ENCODE measurements at regions of chr17 and their contacts with region 1.

Region 1: DNA sequence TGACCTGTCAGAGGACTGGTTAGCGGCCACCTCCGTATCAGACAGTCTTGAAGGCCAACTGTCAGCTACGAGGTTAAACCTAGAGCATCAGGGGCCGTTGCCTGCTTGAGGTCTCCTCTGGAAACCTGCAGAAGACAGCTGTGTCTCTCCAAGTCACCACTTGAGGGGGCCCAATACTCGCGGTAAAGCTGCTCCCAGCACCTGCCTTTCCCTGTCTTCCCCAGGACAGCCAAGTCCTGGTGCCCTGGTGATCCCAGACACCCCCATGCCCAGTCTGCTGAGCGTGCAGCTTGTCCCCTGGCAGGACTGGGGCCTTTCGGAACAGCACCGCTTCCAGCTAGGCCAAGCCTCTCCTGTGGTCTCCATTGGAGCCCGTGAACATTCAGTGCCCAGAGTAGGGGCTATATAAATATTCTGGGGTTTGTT is 80.1 kb downstream of the DNAH17 start:
- DNase-seq: peak; percentile 66 to 85 (median 84)
- ATAC-seq: peak; percentile 78 to 79
- H3K4me3 ChIP-seq: no peak overlapping the region
- H3K27ac ChIP-seq: no peak overlapping the region
- H3K4me1 ChIP-seq: no peaks in the 10 kb centered on the region
- H3K27me3 ChIP-seq: no peaks in the 10 kb centered on the region

Region 2: GRCh38 chr17:78708510-78708973 is 211.4 kb after region 1 on chr17:
- intact Hi-C with region 1: loop called (anchors 2 to 5 kb)
- DNase-seq: peak; percentile 72 to 87 (median 86)
- ATAC-seq: peak; percentile 89 to 90
- H3K4me3 ChIP-seq: no peak overlapping the region
- H3K27ac ChIP-seq: no peak overlapping the region
- H3K4me1 ChIP-seq: peaks cover 4% of the 10 kb centered on the region
- H3K27me3 ChIP-seq: no peaks in the 10 kb centered on the region

Region 3: GRCh38 chr17:78798695-78799559 is 301.8 kb after region 1 on chr17:
- intact Hi-C with region 1: loop called in 3 of 4 experiments (anchors 5 kb)
- DNase-seq: peak in 1 of 3 donors; percentile 66
- ATAC-seq: peak; percentile 20 to 40
- H3K4me3 ChIP-seq: no peak overlapping the region
- H3K27ac ChIP-seq: no peak overlapping the region
- H3K4me1 ChIP-seq: peaks cover 2% of the 10 kb centered on the region
- H3K27me3 ChIP-seq: no peaks in the 10 kb centered on the region

Measured in right cardiac atrium (tissue), 5 donors.